Sigmoid colon (tissue), 7 donors: ENCODE measurements at regions of chr9 and their contacts with region 1.

Region 1: DNA sequence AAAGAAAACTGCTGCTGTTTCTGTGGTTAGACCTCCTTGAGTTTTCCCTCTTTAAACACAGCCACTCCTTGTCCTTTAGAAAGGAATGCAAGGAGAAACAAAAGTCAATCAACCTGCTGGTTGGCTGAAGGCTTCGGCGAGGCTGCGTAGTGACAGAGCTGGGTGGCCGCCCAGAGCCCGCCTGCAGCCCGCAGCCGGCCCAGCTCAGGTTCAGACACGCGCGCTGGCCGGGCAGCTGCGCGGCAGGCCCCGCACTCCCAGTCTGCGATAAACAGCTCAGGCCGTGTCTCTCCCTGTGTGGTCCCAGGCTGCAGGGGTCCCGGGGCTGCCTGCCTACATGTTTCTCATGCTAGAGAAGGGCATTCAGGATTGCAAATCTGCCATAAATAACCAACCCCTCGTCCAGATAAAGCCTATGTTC is 115.4 kb downstream of the HSD17B3 start:
- DNase-seq: peak; percentile 63
- H3K4me3 ChIP-seq: peak overlapping the region in 1 of 4 donors; percentile 2
- H3K27ac ChIP-seq: peak overlapping the region in 3 of 4 donors; percentile 15 to 46 (median 41)
- H3K4me1 ChIP-seq: peaks cover 0 to 14% (median 12%) of the 10 kb centered on the region in 4 donors
- H3K27me3 ChIP-seq: no peaks in the 10 kb centered on the region
- CTCF ChIP-seq: no peak
- EP300 ChIP-seq: no peak
- POLR2A ChIP-seq: no peak

Region 2: DNA sequence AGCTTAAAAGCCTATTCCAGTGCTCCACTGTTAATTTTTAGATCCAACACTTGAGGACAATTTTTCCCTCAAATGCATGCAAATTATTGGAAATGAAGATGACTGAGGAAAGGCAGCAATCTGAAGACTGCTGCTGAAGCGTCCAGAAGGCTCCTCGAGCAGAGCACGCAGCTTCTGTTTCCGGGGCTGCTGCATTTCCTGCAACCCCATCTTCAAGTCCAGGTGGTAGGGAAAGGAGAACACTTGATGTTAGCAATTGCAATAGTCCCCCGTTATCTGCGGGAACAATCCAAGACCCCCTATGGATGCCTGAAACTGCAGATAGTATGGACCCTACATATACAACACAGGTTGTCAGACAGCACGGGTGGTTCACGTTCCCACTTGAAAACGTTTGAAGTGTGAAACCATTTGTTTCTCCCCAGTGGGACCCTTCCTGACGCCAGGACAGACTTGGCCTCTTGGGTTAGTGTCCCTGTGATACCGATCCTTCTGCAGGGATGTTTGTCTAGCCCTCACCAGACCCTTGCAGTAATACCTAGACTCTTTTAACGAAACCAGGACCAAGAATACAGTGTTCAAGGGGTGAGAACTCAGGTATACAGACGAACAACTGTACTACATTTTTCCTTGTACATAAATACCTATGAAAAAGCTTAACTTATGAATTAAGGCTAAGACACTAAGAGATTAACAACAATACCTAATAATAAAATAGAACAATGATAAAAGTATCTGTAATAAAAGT is 36.9 kb before region 1 on chr9:
- intact Hi-C with region 1: loop called (anchors 5 kb)
- DNase-seq: peak; percentile 5
- H3K4me3 ChIP-seq: no peak overlapping the region
- H3K27ac ChIP-seq: peak overlapping the region in 2 of 4 donors; percentile 30 to 69
- H3K4me1 ChIP-seq: peaks cover 0 to 18% (median 13%) of the 10 kb centered on the region in 4 donors
- H3K27me3 ChIP-seq: no peaks in the 10 kb centered on the region
- CTCF ChIP-seq: no peak
- EP300 ChIP-seq: no peak
- POLR2A ChIP-seq: no peak

Region 3: GRCh38 chr9:96500696-96501632 is 314.4 kb after region 1 on chr9:
- intact Hi-C with region 1: no loop called
- DNase-seq: no peak
- H3K4me3 ChIP-seq: no peak overlapping the region
- H3K27ac ChIP-seq: peak overlapping the region in 2 of 4 donors; percentile 30 to 39
- H3K4me1 ChIP-seq: no peaks in the 10 kb centered on the region
- H3K27me3 ChIP-seq: no peaks in the 10 kb centered on the region
- CTCF ChIP-seq: no peak
- EP300 ChIP-seq: no peak
- POLR2A ChIP-seq: no peak